ENCODE measurements at regions of chr6 and their contacts with region 1.

Region 1: DNA sequence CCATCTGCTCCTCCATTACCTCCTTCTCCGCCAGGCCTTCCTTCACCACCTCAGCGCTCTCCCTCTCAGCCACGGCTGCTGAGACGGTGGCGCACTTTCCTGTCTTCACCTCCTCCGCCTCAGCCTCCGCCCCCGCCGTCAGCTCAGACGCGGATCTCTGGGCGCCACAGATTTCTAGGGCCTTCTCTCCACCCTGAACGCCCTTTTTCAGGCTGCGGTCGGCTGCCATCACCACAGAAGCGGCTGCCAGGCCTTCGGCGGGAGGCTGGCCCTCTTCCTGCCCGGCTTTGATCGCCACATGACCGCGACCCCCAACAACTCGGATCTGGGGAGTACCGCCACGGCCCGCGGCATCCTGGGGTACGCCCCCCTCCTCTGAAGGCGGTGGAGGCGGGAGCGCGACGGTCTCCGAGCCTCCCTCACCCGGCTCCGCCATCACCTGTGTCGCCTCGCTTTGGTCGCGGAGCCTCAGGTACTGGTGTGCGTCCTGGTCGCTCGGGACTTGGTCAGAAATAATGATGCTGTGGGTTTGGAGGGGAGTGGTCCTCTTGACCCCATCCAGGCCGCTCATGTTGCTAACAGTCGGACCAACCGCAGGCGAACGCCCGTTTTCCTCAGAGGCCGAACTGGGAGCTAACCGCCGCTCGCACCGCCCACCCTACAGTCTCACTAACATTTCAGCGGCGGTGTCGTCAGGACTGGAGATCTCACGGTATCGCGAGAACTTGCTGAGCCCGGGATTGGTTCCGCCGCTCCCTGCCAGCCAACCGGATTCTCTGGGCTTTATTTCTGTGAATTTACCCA is at the start of gene TSPYL1:
- DNase-seq: peak; percentile 99
- H3K4me3 ChIP-seq: peak within 1 kb of the TSS; percentile 78 to 95 (median 84)
- H3K27ac ChIP-seq: peak within 1 kb of the TSS; percentile 95 to 99 (median 98)
- H3K4me1 ChIP-seq: peaks cover 40 to 54% (median 50%) of the 10 kb centered on the region in 4 donors
- H3K27me3 ChIP-seq: no peaks in the 10 kb centered on the region
- CTCF ChIP-seq: no peak
- EP300 ChIP-seq: no peak
- POLR2A ChIP-seq: peak; percentile 92
- total RNA-seq, gene TSPYL1: 67.7 to 113 (median 92.5) TPM

Region 2: GRCh38 chr6:115691433-115691832 is 588.0 kb before region 1 on chr6:
- intact Hi-C with region 1: no loop called
- DNase-seq: no peak
- H3K4me3 ChIP-seq: no peak overlapping the region
- H3K27ac ChIP-seq: no peak overlapping the region
- H3K4me1 ChIP-seq: no peaks in the 10 kb centered on the region
- H3K27me3 ChIP-seq: no peaks in the 10 kb centered on the region
- CTCF ChIP-seq: no peak
- EP300 ChIP-seq: no peak
- POLR2A ChIP-seq: no peak

Region 3: DNA sequence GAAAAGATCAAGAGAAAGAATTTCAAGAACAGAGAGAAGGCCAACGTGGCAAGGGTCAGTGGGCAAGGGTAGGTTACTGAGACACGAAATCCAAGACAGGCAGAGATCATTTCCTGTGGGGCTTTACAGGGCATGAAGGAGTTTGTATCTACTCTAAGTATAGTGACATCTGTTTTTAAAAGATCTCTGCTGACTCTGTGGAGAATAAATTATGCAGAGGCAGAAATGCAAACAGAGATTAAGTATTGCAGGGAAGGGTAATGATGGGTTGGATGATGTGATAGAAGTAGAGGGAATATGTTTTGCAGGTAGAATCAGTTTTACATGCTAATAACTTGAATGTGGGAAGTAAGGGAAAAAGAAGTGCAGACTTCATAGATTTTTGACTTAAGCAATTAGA is 462.3 kb before region 1 on chr6:
- intact Hi-C with region 1: no loop called
- DNase-seq: no peak
- H3K4me3 ChIP-seq: no peak overlapping the region
- H3K27ac ChIP-seq: no peak overlapping the region
- H3K4me1 ChIP-seq: no peaks in the 10 kb centered on the region
- H3K27me3 ChIP-seq: no peaks in the 10 kb centered on the region
- CTCF ChIP-seq: no peak
- EP300 ChIP-seq: no peak
- POLR2A ChIP-seq: no peak

Region 4: DNA sequence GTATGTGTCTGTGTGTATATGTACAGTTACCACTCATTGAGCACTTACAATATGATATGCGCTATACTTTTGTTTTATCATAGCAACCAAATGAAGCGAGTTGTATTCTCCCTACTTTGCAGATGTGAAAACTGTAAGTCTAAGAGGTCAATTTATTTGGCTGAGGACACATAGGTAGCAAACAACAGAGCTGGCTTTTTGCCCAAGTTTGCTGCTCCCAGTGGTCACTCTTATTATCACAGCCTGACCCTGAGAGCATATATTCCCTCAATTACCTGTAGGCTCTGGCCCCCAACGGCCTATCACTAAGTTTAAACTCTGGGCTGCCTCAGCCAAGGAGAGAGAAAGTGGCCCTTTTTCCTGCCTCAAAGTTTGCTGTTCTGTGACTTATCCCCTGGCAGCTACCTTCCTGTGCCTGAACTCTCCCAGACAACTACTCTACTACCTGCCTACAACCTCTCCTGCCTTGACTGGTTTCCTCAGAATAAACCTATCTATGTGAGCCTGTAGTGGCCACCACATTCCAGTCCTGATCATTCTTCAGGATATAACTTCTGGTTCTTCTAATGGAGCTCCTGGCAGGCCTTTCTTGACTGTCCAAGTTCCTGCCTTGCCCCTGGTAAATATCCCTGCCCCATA is 440.6 kb before region 1 on chr6:
- intact Hi-C with region 1: no loop called
- DNase-seq: no peak
- H3K4me3 ChIP-seq: no peak overlapping the region
- H3K27ac ChIP-seq: no peak overlapping the region
- H3K4me1 ChIP-seq: no peaks in the 10 kb centered on the region
- H3K27me3 ChIP-seq: no peaks in the 10 kb centered on the region
- CTCF ChIP-seq: peak in 1 of 3 experiments; percentile 42
- EP300 ChIP-seq: no peak
- POLR2A ChIP-seq: no peak

Region 5: GRCh38 chr6:116371120-116371917 is 91.9 kb after region 1 on chr6:
- intact Hi-C with region 1: loop called (anchors 5 kb)
- DNase-seq: no peak
- H3K4me3 ChIP-seq: peak overlapping the region; percentile 79 to 91 (median 83)
- H3K27ac ChIP-seq: peak overlapping the region; percentile 92 to 98 (median 94)
- H3K4me1 ChIP-seq: peaks cover 3 to 26% (median 19%) of the 10 kb centered on the region in 4 donors
- H3K27me3 ChIP-seq: no peaks in the 10 kb centered on the region
- CTCF ChIP-seq: no peak
- EP300 ChIP-seq: no peak
- POLR2A ChIP-seq: no peak

Region 6: GRCh38 chr6:116561377-116562018 is 282.0 kb after region 1 on chr6:
- intact Hi-C with region 1: loop called (anchors 10 kb)
- DNase-seq: no peak
- H3K4me3 ChIP-seq: peak overlapping the region in 2 of 4 donors; percentile 26 to 27
- H3K27ac ChIP-seq: no peak overlapping the region
- H3K4me1 ChIP-seq: peaks cover 3 to 29% (median 14%) of the 10 kb centered on the region in 4 donors
- H3K27me3 ChIP-seq: no peaks in the 10 kb centered on the region
- CTCF ChIP-seq: peak; percentile 89 to 97 (median 89)
- EP300 ChIP-seq: no peak
- POLR2A ChIP-seq: no peak

Measured in esophagus muscularis mucosa (tissue), 4 donors.